ENCODE measurements at regions of chr2 and their contacts with region 1.

Region 1: GRCh38 chr2:200811336-200812121 is at the start of gene BZW1:
- DNase-seq: peak; percentile 94 to 98 (median 96)
- ATAC-seq: peak; percentile 86
- H3K4me3 ChIP-seq: peak within 1 kb of the TSS; percentile 77
- H3K4me3 Mint-ChIP-seq: peak within 1 kb of the TSS; percentile 100
- H3K27ac ChIP-seq: peak within 1 kb of the TSS; percentile 97 to 99
- H3K27ac Mint-ChIP-seq: peak within 1 kb of the TSS; percentile 93
- H3K4me1 ChIP-seq: peaks cover 20% of the 10 kb centered on the region
- H3K4me1 Mint-ChIP-seq: peaks cover 57% of the 10 kb centered on the region
- H3K27me3 ChIP-seq: no peaks in the 10 kb centered on the region
- H3K27me3 Mint-ChIP-seq: no peaks in the 10 kb centered on the region
- CTCF ChIP-seq: no peak
- total RNA-seq, gene BZW1: 190 to 192 TPM

Region 2: DNA sequence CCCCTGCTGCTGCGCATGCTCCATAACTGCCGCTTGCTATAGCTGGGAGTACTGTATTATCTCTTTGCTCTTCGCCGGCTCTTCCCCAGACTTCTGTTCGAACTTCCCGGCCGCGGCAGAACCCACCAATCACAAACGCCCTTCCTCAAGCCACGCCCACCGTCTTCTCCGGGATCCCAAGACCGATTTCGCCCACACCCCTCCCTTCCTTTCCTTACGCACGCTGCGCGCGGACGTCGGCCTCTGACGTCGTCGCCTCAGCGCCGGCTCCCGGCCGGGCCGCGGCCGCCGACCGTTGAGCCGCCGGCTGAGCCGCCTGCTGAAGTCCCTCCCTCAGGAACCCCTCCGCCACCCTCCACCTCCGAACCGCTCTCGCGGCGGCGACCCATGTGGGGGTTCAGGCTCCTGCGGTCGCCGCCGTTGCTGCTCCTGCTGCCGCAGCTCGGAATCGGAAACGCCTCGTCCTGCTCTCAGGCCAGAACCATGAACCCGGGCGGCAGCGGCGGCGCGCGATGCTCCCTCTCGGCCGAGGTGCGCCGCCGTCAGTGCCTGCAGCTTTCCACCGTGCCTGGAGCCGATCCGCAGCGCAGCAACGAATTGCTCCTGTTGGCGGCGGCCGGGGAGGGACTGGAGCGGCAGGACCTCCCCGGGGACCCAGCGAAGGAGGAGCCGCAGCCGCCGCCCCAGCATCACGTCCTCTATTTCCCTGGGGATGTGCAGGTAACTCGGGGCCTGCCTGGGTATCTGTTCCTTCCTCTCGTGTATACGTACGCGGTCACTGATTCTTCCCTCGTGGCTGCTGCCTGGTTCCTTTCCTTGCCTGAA is 900.3 kb before region 1 on chr2 and contains the start of gene C2orf69:
- CTCF ChIA-PET with region 1: no interaction called
- POLR2A ChIA-PET with region 1: no interaction called
- intact Hi-C with region 1: loop called in 1 of 2 experiments (anchors 5 kb)
- DNase-seq: peak; percentile 78 to 97 (median 88)
- ATAC-seq: peak; percentile 79
- H3K4me3 ChIP-seq: peak within 1 kb of the TSS; percentile 78
- H3K4me3 Mint-ChIP-seq: peak within 1 kb of the TSS; percentile 99
- H3K27ac ChIP-seq: peak within 1 kb of the TSS; percentile 67 to 80
- H3K27ac Mint-ChIP-seq: peak within 1 kb of the TSS; percentile 95
- H3K4me1 ChIP-seq: peaks cover 17% of the 10 kb centered on the region
- H3K4me1 Mint-ChIP-seq: peaks cover 40% of the 10 kb centered on the region
- H3K27me3 ChIP-seq: no peaks in the 10 kb centered on the region
- H3K27me3 Mint-ChIP-seq: no peaks in the 10 kb centered on the region
- CTCF ChIP-seq: no peak
- total RNA-seq, gene C2orf69: 12.5 to 13.7 TPM

Region 3: GRCh38 chr2:200274116-200275075 is 537.1 kb before region 1 on chr2:
- CTCF ChIA-PET with region 1: no interaction called
- POLR2A ChIA-PET with region 1: no interaction called
- intact Hi-C with region 1: no loop called
- DNase-seq: no peak
- ATAC-seq: no peak
- H3K4me3 ChIP-seq: no peak overlapping the region
- H3K4me3 Mint-ChIP-seq: no peak overlapping the region
- H3K27ac ChIP-seq: no peak overlapping the region
- H3K27ac Mint-ChIP-seq: no peak overlapping the region
- H3K4me1 ChIP-seq: no peaks in the 10 kb centered on the region
- H3K4me1 Mint-ChIP-seq: no peaks in the 10 kb centered on the region
- H3K27me3 ChIP-seq: peaks cover 0 to 6% of the 10 kb centered on the region in 2 experiments
- H3K27me3 Mint-ChIP-seq: peaks cover 9% of the 10 kb centered on the region
- CTCF ChIP-seq: no peak

Region 4: GRCh38 chr2:200509612-200510433 is 301.7 kb before region 1 on chr2 and contains the start of gene KCTD18:
- CTCF ChIA-PET with region 1: no interaction called
- POLR2A ChIA-PET with region 1: no interaction called
- intact Hi-C with region 1: loop called in 1 of 2 experiments (anchors 5 kb)
- DNase-seq: peak; percentile 81 to 94 (median 92)
- ATAC-seq: peak; percentile 99
- H3K4me3 ChIP-seq: peak within 1 kb of the TSS; percentile 84
- H3K4me3 Mint-ChIP-seq: peak within 1 kb of the TSS; percentile 95
- H3K27ac ChIP-seq: peak within 1 kb of the TSS; percentile 54
- H3K27ac Mint-ChIP-seq: peak within 1 kb of the TSS; percentile 91
- H3K4me1 ChIP-seq: peaks cover 27% of the 10 kb centered on the region
- H3K4me1 Mint-ChIP-seq: peaks cover 46% of the 10 kb centered on the region
- H3K27me3 ChIP-seq: no peaks in the 10 kb centered on the region
- H3K27me3 Mint-ChIP-seq: no peaks in the 10 kb centered on the region
- CTCF ChIP-seq: peak; percentile 72
- total RNA-seq, gene KCTD18: 18.9 to 19.8 TPM

Region 5: DNA sequence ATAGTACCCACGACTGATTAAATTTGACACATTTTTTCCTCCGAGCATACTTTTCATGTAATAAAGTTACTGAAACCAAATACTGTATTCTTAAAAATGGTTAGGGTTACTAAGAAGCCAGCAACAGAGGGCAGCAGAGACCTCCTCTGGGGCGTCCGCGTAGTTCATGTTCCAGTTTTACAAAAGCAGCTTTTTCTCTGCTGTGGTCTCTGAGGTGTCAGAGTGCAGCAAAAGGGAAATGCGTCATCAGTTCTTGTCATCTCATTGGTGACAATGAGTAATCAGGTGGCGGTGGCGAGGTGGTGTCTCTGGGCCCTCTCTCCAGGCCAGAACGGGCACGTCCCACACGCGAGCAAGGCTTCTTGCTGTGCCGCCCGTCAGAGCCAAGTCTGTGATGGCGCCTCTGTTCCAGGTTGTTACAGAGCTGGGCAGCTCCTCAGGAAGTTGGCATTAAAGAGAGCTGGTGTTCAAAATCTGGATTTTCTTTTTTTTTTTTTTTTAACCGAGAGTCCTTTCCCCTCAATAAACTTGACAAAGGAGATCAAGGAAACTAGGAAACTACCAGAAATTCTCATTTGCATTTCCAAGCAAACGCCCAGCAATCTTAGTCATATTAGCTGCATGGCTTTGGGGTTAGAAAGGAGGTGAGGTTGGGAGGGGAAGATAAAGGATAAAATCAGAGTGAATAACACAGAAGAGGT is 98.4 kb before region 1 on chr2:
- CTCF ChIA-PET with region 1: interaction called, 12 read pairs
- POLR2A ChIA-PET with region 1: interaction called, 24 read pairs
- intact Hi-C with region 1: loop called (anchors 1 to 2 kb)
- DNase-seq: peak; percentile 84 to 98 (median 88)
- ATAC-seq: peak; percentile 96
- H3K4me3 ChIP-seq: peak overlapping the region; percentile 33
- H3K4me3 Mint-ChIP-seq: peak overlapping the region; percentile 77
- H3K27ac ChIP-seq: peak overlapping the region; percentile 81 to 95
- H3K27ac Mint-ChIP-seq: peak overlapping the region; percentile 99
- H3K4me1 ChIP-seq: peaks cover 9% of the 10 kb centered on the region
- H3K4me1 Mint-ChIP-seq: peaks cover 13% of the 10 kb centered on the region
- H3K27me3 ChIP-seq: no peaks in the 10 kb centered on the region
- H3K27me3 Mint-ChIP-seq: no peaks in the 10 kb centered on the region
- CTCF ChIP-seq: peak; percentile 89

Region 6: DNA sequence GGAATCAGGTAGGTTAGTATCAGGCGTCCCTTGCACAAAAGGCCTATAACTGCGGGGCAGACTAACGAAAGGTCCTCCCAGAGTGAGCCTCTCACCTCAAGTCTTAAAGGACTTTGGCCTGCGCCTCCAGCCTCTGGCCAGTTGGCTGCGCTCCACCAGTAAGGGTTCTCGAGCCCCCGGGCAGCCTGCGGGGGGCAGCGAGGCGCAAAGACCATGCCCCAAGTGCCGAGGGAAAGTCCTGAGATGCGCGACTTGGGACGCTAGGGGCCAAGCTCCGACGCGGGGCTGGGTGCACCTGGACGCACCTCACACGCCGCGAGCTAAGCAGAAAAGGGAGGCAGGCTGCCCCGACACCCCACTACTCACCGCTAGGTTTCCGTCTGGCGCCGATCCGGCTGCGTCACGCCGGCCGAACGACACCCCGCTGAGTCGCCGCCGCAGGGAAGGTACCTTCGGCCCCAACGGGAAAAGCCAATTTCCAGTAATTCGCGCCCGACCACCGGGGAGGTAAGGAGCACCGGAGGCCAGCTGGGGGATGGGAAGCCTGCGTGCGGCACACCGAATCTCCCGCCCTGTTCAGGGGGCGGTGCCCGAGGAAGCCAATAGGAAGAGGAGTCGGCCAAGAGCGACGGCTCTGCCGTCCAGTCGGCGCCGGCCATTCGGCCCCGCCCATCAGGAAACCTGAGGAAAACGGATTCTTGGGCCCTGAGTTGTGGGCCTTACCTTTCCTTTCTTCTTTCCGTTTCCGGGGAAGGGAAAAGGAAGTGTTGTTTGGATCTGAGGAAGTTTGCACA is 151.8 kb after region 1 on chr2 and contains the start of gene ORC2:
- CTCF ChIA-PET with region 1: no interaction called
- POLR2A ChIA-PET with region 1: interaction called, 7 read pairs
- intact Hi-C with region 1: loop called in 1 of 2 experiments (anchors 5 kb)
- DNase-seq: peak; percentile 87 to 96 (median 90)
- ATAC-seq: peak; percentile 95
- H3K4me3 ChIP-seq: peak within 1 kb of the TSS; percentile 98
- H3K4me3 Mint-ChIP-seq: peak within 1 kb of the TSS; percentile 99
- H3K27ac ChIP-seq: peak within 1 kb of the TSS; percentile 89 to 92
- H3K27ac Mint-ChIP-seq: peak within 1 kb of the TSS; percentile 100
- H3K4me1 ChIP-seq: peaks cover 25% of the 10 kb centered on the region
- H3K4me1 Mint-ChIP-seq: peaks cover 73% of the 10 kb centered on the region
- H3K27me3 ChIP-seq: no peaks in the 10 kb centered on the region
- H3K27me3 Mint-ChIP-seq: no peaks in the 10 kb centered on the region
- CTCF ChIP-seq: peak; percentile 74
- total RNA-seq, gene ORC2: 25.0 to 26.6 TPM

Region 7: DNA sequence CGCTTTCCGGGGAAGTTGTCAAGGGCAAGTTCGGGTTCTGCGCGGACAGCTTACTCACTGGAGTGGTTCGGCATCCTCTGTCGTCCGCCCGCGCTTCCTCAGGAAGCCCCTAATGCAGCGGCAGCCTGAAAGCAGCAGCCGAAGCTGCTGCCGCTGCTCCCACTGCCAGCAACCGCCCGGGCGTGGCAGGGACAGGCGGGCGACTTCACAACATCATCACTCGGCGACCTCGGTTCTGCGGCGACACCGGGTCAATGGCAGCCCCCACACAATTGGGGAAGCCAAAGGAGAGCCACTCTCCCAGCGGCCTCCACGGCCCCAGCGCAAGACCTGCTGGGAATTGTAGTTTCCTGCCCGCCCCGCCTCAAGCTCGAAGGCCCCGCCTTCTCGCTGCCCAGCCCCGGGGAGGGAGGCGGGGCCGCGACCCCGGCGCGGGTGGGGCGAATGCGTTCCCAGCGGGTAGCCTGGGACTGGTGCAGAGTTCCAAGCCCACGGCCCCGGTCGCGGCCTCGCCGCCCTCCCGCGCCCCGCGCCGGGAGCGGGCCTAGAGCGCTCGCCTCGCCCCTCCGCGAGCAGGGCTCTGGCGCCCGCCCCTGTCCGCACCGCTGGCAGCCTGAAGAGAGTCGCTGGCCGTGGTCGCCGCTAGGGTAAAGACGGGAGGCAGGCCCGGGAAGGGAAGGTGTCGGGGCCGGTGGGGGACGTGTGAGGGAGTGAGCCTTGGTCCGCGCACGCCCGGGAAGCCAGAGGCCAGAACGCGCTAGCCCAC is 639.9 kb after region 1 on chr2 and contains the starts of genes STRADB and TRAK2:
- CTCF ChIA-PET with region 1: no interaction called
- POLR2A ChIA-PET with region 1: interaction called, 3 read pairs
- intact Hi-C with region 1: loop called in 1 of 2 experiments (anchors 5 kb)
- DNase-seq: peak; percentile 87 to 98 (median 92)
- ATAC-seq: peak; percentile 84
- H3K4me3 ChIP-seq: peak within 1 kb of the TSS; percentile 90
- H3K4me3 Mint-ChIP-seq: peak within 1 kb of the TSS; percentile 97
- H3K27ac ChIP-seq: peak within 1 kb of the TSS; percentile 83 to 85
- H3K27ac Mint-ChIP-seq: peak within 1 kb of the TSS; percentile 98
- H3K4me1 ChIP-seq: peaks cover 44% of the 10 kb centered on the region
- H3K4me1 Mint-ChIP-seq: peaks cover 61% of the 10 kb centered on the region
- H3K27me3 ChIP-seq: no peaks in the 10 kb centered on the region
- H3K27me3 Mint-ChIP-seq: no peaks in the 10 kb centered on the region
- CTCF ChIP-seq: no peak
- total RNA-seq, gene STRADB: 4.2 to 5.6 TPM
- total RNA-seq, gene TRAK2: 32.5 to 35.6 TPM

Measured in CD4-positive, alpha-beta T cell (primary cell).